ENCODE measurements at regions of chr6 and their contacts with region 1.

Region 1: DNA sequence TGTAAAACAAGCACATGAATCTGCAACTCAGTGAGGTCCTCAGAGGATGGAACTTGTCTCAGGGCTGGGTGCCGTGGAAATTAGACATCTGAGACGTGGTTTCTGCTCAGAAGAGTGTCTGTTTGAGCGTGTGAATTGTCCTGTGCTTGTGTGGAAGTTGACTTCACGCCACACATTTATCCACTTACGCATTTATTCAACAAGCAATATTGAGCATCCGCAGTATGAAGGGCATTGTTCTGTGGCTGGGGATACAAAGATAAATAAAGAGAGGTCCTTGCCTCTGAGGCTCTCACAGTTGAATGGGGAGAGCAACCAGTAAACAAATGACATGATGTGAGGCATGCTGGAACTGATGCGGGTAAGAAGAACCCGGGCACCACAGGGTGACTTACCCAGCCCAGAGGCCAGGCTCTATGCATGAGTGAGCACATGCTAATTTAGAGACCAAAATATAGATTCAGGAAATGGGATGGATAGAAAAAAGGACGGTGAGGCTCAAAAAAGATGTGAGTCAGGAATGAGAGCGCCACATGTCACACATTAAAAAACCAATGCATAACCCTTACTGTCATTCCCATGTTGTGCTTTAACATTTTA is 60.4 kb downstream of the SOBP start:
- DNase-seq: no peak
- H3K4me3 ChIP-seq: no peak overlapping the region
- H3K27ac ChIP-seq: no peak overlapping the region
- H3K4me1 ChIP-seq: no peaks in the 10 kb centered on the region
- H3K27me3 ChIP-seq: no peaks in the 10 kb centered on the region
- CTCF ChIP-seq: no peak
- POLR2A ChIP-seq: no peak

Region 2: DNA sequence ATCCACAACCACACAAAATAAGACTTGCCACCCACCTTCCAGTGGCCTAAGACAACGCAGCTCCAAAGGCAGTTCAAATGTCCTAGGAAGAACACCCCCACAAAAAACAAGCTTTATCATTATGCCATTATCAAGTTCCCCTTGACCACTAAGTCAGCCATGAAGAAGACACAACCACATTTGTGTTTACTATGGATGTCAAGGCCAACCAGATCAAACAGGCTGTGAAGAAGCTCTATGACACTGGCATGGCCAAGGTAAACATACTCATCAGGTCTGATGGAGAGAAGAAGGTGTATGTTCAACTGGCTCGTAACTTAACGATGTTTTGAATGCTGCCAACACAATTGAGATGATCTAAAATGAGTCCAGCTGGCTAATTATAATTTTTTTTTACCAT is 381.6 kb after region 1 on chr6:
- intact Hi-C with region 1: loop called (anchors 5 kb)
- DNase-seq: no peak
- H3K4me3 ChIP-seq: no peak overlapping the region
- H3K27ac ChIP-seq: no peak overlapping the region
- H3K4me1 ChIP-seq: no peaks in the 10 kb centered on the region
- H3K27me3 ChIP-seq: no peaks in the 10 kb centered on the region
- CTCF ChIP-seq: no peak
- POLR2A ChIP-seq: no peak